Activated T-helper 2 cell treated with anti-CD3 and anti-CD28 coated beads, Interferon-gamma antibody, Interleukin-2, Interleukin-4, amounts not matched to agents 10 μg/mL and 5 μg/mL and 100 μg/mL, durations not matched to agents 14 hours and 24 hours and 36 hours (primary cell): ENCODE measurements at regions of chr5 and their contacts with region 1.

Region 1: GRCh38 chr5:132064738-132065331 is 4.4 kb downstream of the IL3 start:
- DNase-seq: peak; percentile 73
- H3K4me3 Mint-ChIP-seq: no peak overlapping the region
- H3K27ac Mint-ChIP-seq: peak overlapping the region; percentile 71
- H3K4me1 Mint-ChIP-seq: peaks cover 55% of the 10 kb centered on the region
- H3K27me3 Mint-ChIP-seq: no peaks in the 10 kb centered on the region

Region 2: GRCh38 chr5:131589510-131590348 is 475.1 kb before region 1 on chr5:
- intact Hi-C with region 1: loop called (anchors 1 kb)
- DNase-seq: no peak
- H3K4me3 Mint-ChIP-seq: no peak overlapping the region
- H3K27ac Mint-ChIP-seq: no peak overlapping the region
- H3K4me1 Mint-ChIP-seq: peaks cover 35% of the 10 kb centered on the region
- H3K27me3 Mint-ChIP-seq: no peaks in the 10 kb centered on the region

Region 3: DNA sequence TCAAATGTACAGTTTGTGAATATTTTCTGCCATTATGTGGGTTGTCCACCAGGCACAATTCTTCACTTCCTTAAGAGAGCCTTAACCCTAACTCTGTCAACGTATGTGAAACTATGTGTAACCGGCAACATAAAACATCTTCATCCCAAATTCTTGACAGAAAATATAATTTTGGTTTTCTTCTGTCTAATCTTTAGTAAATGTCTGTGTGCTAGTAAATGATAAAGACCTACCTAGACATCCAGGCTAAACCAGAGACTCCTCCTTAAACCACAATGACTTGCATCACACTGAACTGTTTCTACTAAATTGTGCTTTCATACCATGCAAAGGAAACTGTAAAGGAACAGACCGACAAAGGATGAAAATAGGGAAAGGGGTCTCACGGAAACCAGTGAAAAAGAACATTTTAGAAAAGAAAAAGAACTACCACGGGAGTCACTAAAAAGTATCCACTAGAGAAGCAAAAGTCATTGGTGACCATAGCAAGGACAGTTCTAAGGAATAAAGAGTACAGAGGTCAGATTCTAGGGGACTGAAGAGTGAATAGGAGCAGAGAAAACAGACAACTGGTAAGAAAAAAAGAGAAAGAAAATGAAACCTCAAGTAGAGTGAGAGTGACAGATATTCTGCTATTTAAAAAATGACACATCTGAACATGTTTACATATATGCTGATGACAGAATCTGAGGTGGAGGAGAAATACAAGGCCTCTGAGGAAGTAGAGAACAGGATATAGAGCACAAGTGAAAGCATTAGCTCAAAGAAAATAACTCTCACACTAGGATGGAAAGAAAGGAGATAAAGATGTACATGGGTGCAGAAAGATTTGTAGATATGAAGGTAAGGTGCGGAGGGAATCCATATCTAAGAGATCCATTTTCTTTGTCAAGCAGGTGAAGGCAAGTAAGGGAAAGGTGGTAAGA is 317.4 kb before region 1 on chr5:
- intact Hi-C with region 1: loop called (anchors 5 kb)
- DNase-seq: no peak
- H3K4me3 Mint-ChIP-seq: peak overlapping the region; percentile 61
- H3K27ac Mint-ChIP-seq: peak overlapping the region; percentile 88
- H3K4me1 Mint-ChIP-seq: peaks cover 40% of the 10 kb centered on the region
- H3K27me3 Mint-ChIP-seq: no peaks in the 10 kb centered on the region

Region 4: DNA sequence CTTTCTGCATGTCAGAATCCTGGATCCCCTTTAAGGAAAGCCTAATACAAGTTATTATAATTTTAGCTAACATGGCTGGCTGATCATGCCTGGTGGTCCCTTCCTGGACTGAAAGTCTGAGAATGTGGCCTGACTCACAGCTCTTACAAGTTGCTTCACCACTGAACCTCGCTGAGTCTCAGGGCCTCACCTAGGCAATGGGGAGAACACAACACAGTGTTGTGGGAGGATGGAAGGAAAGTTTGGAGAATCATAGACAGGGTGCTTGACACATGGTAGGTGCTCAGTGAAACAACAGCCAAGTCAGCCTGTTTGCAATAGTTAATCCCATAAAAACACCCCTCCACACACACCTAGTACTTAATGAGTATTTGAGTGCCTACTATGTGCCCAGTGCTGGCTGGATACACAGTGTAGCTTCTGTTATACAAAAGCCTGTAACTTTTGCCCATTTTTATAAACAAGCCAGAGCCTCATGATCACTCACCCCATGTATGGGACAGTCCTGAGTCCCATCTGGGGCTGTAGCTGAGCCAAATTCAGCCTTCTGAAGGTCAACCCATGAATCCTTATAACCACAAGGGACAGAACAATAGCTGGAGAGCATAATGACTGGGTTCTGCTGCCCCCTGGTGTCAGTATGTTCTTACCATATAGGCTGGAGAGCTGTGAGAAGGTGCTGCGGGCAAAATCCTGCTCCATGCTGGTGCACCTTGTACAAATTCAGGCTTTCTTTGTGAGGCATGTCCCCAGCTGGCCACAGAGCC is 57.3 kb before region 1 on chr5:
- intact Hi-C with region 1: loop called (anchors 2 kb)
- DNase-seq: peak; percentile 64
- H3K4me3 Mint-ChIP-seq: no peak overlapping the region
- H3K27ac Mint-ChIP-seq: no peak overlapping the region
- H3K4me1 Mint-ChIP-seq: peaks cover 34% of the 10 kb centered on the region
- H3K27me3 Mint-ChIP-seq: peaks cover 31% of the 10 kb centered on the region

Region 5: GRCh38 chr5:132105688-132106087 is 40.9 kb after region 1 on chr5:
- intact Hi-C with region 1: no loop called
- DNase-seq: no peak
- H3K4me3 Mint-ChIP-seq: peak overlapping the region; percentile 17
- H3K27ac Mint-ChIP-seq: peak overlapping the region; percentile 99
- H3K4me1 Mint-ChIP-seq: peaks cover 77% of the 10 kb centered on the region
- H3K27me3 Mint-ChIP-seq: no peaks in the 10 kb centered on the region

Region 6: DNA sequence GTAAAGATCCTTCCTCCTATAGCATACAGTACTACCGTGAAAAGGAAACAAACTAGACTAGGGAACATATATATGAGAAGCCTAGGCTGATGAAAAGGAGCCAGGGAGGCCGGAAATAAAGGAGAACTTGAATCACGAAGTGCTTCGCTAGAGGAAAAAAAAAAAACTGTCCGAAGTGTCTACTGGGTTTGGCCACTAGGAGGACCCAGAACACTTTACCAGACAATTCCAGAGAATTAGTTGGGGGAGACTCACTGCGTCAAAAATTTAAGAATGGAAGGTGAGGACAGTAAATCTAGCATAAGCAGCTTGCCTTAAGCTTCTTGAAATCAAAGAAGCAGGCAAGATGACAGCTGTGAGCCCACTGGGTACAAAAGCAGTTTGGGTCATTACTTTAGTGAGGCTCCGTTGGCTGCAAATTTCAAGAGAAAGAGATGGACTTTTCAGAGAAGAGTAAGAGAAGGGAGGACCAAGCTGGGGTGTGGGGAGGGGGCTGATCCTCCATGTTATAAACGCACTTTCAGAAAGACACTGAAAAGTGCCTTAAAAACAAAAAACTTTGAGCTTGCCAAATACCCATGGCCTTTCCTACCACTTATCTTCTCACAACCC is 115.4 kb after region 1 on chr5:
- intact Hi-C with region 1: loop called (anchors 1 kb)
- DNase-seq: no peak
- H3K4me3 Mint-ChIP-seq: peak overlapping the region; percentile 19
- H3K27ac Mint-ChIP-seq: peak overlapping the region; percentile 85
- H3K4me1 Mint-ChIP-seq: peaks cover 44% of the 10 kb centered on the region
- H3K27me3 Mint-ChIP-seq: no peaks in the 10 kb centered on the region

Region 7: GRCh38 chr5:132238169-132238744 is 173.4 kb after region 1 on chr5:
- intact Hi-C with region 1: loop called (anchors 5 kb)
- DNase-seq: peak; percentile 61
- H3K4me3 Mint-ChIP-seq: no peak overlapping the region
- H3K27ac Mint-ChIP-seq: no peak overlapping the region
- H3K4me1 Mint-ChIP-seq: peaks cover 9% of the 10 kb centered on the region
- H3K27me3 Mint-ChIP-seq: peaks cover 9% of the 10 kb centered on the region